GM10248 (cell line): ENCODE measurements at regions of chr13 and their contacts with region 1.

Region 1: GRCh38 chr13:98445340-98446233 is 131.3 kb downstream of the STK24 start:
- DNase-seq: peak; percentile 91
- CTCF ChIP-seq: peak; percentile 99

Region 2: GRCh38 chr13:98004111-98004510 is 441.5 kb before region 1 on chr13:
- CTCF ChIA-PET with region 1: no interaction called
- POLR2A ChIA-PET with region 1: no interaction called
- DNase-seq: no peak
- CTCF ChIP-seq: no peak

Region 3: GRCh38 chr13:98471934-98472333 is 26.3 kb after region 1 on chr13:
- CTCF ChIA-PET with region 1: interaction called, 20 read pairs
- POLR2A ChIA-PET with region 1: no interaction called
- DNase-seq: no peak
- CTCF ChIP-seq: no peak

Region 4: DNA sequence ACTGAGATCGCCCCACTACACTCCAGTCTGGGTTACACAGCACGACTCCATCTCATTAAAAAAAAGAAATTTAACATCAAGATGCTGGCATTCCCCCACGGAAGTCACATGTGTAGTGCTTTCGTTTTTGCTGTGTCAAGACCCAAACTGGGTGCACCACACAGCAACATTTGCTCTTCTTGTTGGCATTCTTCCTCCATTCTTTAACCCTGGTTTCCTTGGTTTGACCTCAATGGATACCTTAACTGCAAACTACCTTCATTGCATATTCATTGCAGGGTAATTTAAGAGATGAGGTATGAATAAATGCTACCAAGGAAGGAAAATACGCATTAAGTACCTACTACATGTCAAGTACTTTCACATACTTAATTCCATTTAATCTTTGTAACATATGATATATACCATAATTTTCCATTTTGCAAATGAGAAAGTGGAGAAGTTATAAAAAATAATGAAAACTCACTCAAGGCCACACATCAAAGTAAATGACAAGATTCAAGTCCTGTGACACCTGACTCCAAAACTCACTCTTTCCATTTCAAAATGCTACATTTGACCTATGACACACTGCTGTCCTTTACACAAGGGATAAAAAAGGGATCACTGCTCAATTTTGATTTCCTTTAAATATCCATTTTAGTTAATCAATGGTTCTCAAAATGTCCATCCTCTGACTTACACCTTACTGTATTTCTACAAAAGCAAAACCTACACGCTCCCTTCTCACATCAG is 72.2 kb after region 1 on chr13:
- CTCF ChIA-PET with region 1: interaction called, 10 read pairs
- POLR2A ChIA-PET with region 1: no interaction called
- DNase-seq: no peak
- CTCF ChIP-seq: no peak

Region 5: GRCh38 chr13:98664039-98664438 is 218.5 kb after region 1 on chr13:
- CTCF ChIA-PET with region 1: interaction called, 15 read pairs
- POLR2A ChIA-PET with region 1: no interaction called
- DNase-seq: no peak
- CTCF ChIP-seq: no peak